Left ventricle myocardium superior (tissue), 1 donor: ENCODE measurements at regions of chr14 and their contacts with region 1.

Region 1: GRCh38 chr14:50964595-50965390 is 20.5 kb upstream of the PYGL start:
- DNase-seq: no peak
- ATAC-seq: peak; percentile 17

Region 2: DNA sequence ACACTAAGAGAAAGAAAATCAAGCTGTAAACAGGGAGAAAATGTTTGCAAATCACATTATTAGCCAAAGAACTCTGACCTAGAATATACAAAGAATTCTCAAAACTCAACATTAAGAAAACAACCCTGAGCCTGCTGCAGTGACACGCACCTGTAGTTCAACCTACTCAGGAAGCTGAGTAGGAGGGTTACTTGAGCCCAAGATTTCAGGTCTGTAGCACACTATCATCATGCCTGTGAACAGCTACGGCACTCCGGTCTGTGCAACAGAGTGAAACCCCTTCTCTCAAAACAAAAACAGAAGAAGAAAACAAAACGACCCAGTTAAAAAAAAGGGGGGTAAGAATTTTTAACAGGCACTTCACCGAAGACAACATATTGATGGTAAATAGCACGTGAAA is 317.5 kb before region 1 on chr14:
- intact Hi-C with region 1: no loop called
- DNase-seq: no peak
- ATAC-seq: no peak

Region 3: DNA sequence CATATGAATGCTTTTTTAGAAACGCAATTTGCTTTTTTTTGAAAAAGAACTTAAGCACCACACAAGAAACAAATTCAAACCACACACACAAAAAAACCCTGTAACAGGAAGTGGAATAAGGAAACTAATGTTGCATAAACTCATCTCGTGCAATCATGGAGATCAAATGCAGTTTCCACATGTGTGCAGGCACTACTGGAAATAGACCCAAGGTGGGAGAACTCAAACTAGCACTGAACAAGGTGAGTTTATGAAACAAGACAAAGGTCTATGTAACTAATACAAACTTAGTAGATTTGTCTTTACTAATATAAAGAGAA is 151.3 kb before region 1 on chr14:
- intact Hi-C with region 1: no loop called
- DNase-seq: no peak
- ATAC-seq: no peak

Region 4: DNA sequence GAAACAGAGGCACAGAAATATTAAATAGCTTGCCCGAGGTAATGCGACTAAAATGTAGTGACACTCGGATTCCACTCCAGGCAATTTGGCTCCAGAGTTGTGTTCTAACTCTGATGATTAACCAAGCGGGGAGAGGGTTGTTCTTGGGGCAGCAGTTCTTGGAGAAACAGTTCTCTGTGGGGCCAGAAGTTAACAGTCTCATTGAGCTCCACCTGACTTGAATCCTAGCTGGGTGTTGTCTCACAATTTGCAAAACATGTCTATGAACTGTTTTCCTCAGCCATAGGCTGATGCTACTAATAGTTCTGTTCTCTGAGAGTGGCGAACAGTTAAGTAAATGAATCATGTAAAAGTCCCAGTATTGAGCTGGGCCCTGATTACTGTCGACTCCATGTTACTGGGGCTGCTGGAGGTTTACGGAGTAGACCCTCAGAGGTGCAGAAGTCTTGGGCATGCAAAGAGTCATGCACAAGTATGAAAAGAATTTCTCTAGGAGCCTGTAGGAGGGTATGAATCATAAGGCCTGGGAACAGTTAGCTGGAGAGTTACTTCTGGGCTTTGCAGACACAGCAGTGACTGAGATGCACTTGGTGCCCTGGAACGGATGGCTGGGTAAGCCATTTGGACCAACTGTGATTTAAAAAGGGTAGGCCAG is 118.4 kb before region 1 on chr14:
- intact Hi-C with region 1: no loop called
- DNase-seq: no peak
- ATAC-seq: no peak

Region 5: GRCh38 chr14:51079489-51079888 is 114.7 kb after region 1 on chr14:
- intact Hi-C with region 1: loop called (anchors 10 kb)
- DNase-seq: no peak
- ATAC-seq: no peak